Activated CD8-positive, alpha-beta T cell treated with anti-CD3 and anti-CD28 coated beads for 36 hours (primary cell): ENCODE measurements at regions of chr11 and their contacts with region 1.

Region 1: DNA sequence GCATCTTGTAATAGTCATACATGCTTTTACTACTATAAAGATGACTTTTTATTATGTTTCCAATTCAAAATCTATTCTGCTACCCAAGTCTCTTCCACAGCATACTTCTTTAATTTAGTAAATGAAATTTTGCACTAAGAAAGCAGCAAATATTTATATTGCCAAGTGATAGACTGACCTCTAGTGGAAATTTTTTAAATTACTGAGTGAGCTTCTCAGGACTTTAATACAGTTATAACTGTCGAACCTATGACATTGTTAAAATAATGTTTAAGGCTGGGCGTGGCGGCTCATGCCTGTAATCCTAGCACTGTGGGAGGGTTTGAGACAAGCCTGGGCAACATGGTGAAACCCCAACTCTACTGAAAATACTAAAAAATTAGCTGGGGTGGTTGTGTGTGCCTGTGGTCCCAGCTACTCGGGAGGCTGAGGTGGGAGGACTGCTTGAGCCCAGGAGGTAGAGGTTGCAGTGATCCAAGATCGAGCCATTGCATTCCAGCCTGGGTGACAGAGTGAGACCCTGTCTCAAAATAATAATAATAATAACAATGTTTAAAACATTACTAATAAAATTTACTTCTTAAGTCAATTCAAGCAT is 27.3 kb downstream of the STK33 start:
- DNase-seq: no peak
- ATAC-seq: peak; percentile 39
- H3K4me3 Mint-ChIP-seq: no peak overlapping the region
- H3K27ac Mint-ChIP-seq: no peak overlapping the region
- H3K4me1 Mint-ChIP-seq: peaks cover 8% of the 10 kb centered on the region
- H3K27me3 Mint-ChIP-seq: peaks cover 12% of the 10 kb centered on the region
- CTCF ChIP-seq: peak; percentile 69

Region 2: GRCh38 chr11:8192016-8192895 is 374.5 kb before region 1 on chr11:
- CTCF ChIA-PET with region 1: interaction called, 21 read pairs
- POLR2A ChIA-PET with region 1: no interaction called
- intact Hi-C with region 1: no loop called
- DNase-seq: peak; percentile 59
- ATAC-seq: peak; percentile 62
- H3K4me3 Mint-ChIP-seq: no peak overlapping the region
- H3K27ac Mint-ChIP-seq: no peak overlapping the region
- H3K4me1 Mint-ChIP-seq: no peaks in the 10 kb centered on the region
- H3K27me3 Mint-ChIP-seq: peaks cover 30% of the 10 kb centered on the region
- CTCF ChIP-seq: peak; percentile 68

Region 3: GRCh38 chr11:8225589-8226036 is 341.1 kb before region 1 on chr11:
- CTCF ChIA-PET with region 1: interaction called, 8 read pairs
- POLR2A ChIA-PET with region 1: no interaction called
- intact Hi-C with region 1: loop called (anchors 5 kb)
- DNase-seq: peak; percentile 80
- ATAC-seq: peak; percentile 84
- H3K4me3 Mint-ChIP-seq: no peak overlapping the region
- H3K27ac Mint-ChIP-seq: no peak overlapping the region
- H3K4me1 Mint-ChIP-seq: no peaks in the 10 kb centered on the region
- H3K27me3 Mint-ChIP-seq: no peaks in the 10 kb centered on the region
- CTCF ChIP-seq: peak; percentile 79

Region 4: GRCh38 chr11:8247312-8247711 is 319.4 kb before region 1 on chr11:
- CTCF ChIA-PET with region 1: interaction called, 12 read pairs
- POLR2A ChIA-PET with region 1: no interaction called
- intact Hi-C with region 1: no loop called
- DNase-seq: peak; percentile 36
- ATAC-seq: peak; percentile 62
- H3K4me3 Mint-ChIP-seq: no peak overlapping the region
- H3K27ac Mint-ChIP-seq: no peak overlapping the region
- H3K4me1 Mint-ChIP-seq: no peaks in the 10 kb centered on the region
- H3K27me3 Mint-ChIP-seq: peaks cover 6% of the 10 kb centered on the region
- CTCF ChIP-seq: peak; percentile 55

Region 5: GRCh38 chr11:8342821-8343681 is 223.7 kb before region 1 on chr11:
- CTCF ChIA-PET with region 1: interaction called, 3 read pairs
- POLR2A ChIA-PET with region 1: no interaction called
- intact Hi-C with region 1: loop called (anchors 10 kb)
- DNase-seq: peak; percentile 38
- ATAC-seq: peak; percentile 71
- H3K4me3 Mint-ChIP-seq: no peak overlapping the region
- H3K27ac Mint-ChIP-seq: no peak overlapping the region
- H3K4me1 Mint-ChIP-seq: peaks cover 3% of the 10 kb centered on the region
- H3K27me3 Mint-ChIP-seq: peaks cover 1% of the 10 kb centered on the region
- CTCF ChIP-seq: no peak

Region 6: GRCh38 chr11:8484251-8484650 is 82.5 kb before region 1 on chr11:
- CTCF ChIA-PET with region 1: no interaction called
- POLR2A ChIA-PET with region 1: no interaction called
- intact Hi-C with region 1: no loop called
- DNase-seq: no peak
- ATAC-seq: no peak
- H3K4me3 Mint-ChIP-seq: no peak overlapping the region
- H3K27ac Mint-ChIP-seq: no peak overlapping the region
- H3K4me1 Mint-ChIP-seq: no peaks in the 10 kb centered on the region
- H3K27me3 Mint-ChIP-seq: no peaks in the 10 kb centered on the region
- CTCF ChIP-seq: no peak

Region 7: DNA sequence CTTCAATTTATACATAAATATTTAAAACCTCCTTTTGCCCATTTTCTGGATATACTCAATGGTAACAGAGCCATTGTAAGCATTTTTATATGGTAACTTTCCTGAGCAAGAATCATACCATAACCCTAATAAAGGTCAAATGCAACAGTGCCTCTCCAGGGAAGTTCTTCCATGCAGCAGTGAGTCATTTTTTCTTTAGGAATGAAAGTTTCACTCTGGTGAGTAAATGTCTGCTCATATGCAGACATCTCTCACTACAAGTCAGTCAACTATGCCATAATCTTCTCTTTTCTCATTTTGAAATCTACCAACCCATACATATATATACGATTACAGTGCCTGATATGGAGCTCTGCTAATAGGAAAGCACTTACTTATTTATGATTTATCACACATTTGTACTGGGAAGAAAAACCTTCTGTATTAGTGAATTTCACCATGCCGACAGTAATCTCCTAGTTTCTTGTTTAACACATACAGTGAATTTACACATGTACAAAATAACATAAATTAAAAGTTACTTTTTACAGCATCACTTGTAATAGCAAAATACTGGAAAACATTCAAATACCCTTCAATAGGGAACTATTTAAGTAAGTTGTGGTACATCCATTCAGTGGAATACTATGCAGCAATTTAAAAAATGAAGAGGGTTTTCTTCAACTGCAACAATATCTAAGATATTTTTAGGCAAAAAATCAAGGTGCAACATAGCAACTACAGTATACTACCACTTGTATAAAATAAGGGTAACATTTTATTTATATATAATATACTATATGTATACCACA is 11.3 kb after region 1 on chr11:
- CTCF ChIA-PET with region 1: interaction called, 14 read pairs
- POLR2A ChIA-PET with region 1: no interaction called
- intact Hi-C with region 1: no loop called
- DNase-seq: no peak
- ATAC-seq: no peak
- H3K4me3 Mint-ChIP-seq: no peak overlapping the region
- H3K27ac Mint-ChIP-seq: no peak overlapping the region
- H3K4me1 Mint-ChIP-seq: no peaks in the 10 kb centered on the region
- H3K27me3 Mint-ChIP-seq: peaks cover 5% of the 10 kb centered on the region
- CTCF ChIP-seq: no peak